ENCODE measurements at regions of chr2 and their contacts with region 1.

Region 1: GRCh38 chr2:100818606-100819369 is 1.2 kb upstream of the NPAS2 start:
- DNase-seq: peak; percentile 86 to 88
- ATAC-seq: peak; percentile 59 to 64
- H3K4me3 ChIP-seq: peak overlapping the region; percentile 68 to 82 (median 70)
- H3K27ac ChIP-seq: peak overlapping the region; percentile 76 to 92 (median 88)
- H3K4me1 ChIP-seq: peaks cover 26 to 33% of the 10 kb centered on the region in 2 donors
- H3K27me3 ChIP-seq: no peaks in the 10 kb centered on the region
- CTCF ChIP-seq: peak in 2 of 5 experiments; percentile 11 to 30
- POLR2A ChIP-seq: peak; percentile 56 to 58

Region 2: DNA sequence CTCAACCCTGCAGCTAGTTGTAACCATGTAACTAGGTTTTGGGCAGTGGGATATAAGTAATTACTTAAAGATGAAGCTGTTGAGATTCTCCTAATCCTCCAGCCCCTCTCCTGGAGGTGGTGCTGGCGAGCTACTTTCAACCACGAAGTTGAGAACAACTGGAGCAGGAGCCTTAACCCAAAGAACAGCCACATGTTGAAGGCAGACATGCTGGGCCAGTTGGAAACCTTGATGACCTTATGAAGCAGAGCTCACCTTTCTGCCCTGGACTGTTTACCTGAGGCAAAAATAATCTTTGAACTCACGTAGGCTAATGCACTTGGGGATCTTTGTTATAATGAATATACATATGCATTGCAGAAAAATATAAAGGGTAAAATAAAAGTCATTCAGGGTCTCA is 88.4 kb before region 1 on chr2:
- in situ Hi-C with region 1: no loop called
- intact Hi-C with region 1: loop called (anchors 2 kb)
- DNase-seq: peak; percentile 14 to 48
- ATAC-seq: peak; percentile 57 to 66
- H3K4me3 ChIP-seq: no peak overlapping the region
- H3K27ac ChIP-seq: no peak overlapping the region
- H3K4me1 ChIP-seq: peaks cover 0 to 3% of the 10 kb centered on the region in 2 donors
- H3K27me3 ChIP-seq: no peaks in the 10 kb centered on the region
- CTCF ChIP-seq: peak; percentile 36 to 62 (median 55)
- POLR2A ChIP-seq: no peak

Region 3: GRCh38 chr2:100935372-100935752 is 116.6 kb after region 1 on chr2:
- in situ Hi-C with region 1: no loop called
- intact Hi-C with region 1: loop called (anchors 5 kb)
- DNase-seq: no peak
- ATAC-seq: peak; percentile 78 to 84
- H3K4me3 ChIP-seq: no peak overlapping the region
- H3K27ac ChIP-seq: peak overlapping the region in 1 of 4 donors; percentile 25
- H3K4me1 ChIP-seq: peaks cover 15 to 21% of the 10 kb centered on the region in 2 donors
- H3K27me3 ChIP-seq: no peaks in the 10 kb centered on the region
- CTCF ChIP-seq: no peak
- POLR2A ChIP-seq: no peak

Region 4: DNA sequence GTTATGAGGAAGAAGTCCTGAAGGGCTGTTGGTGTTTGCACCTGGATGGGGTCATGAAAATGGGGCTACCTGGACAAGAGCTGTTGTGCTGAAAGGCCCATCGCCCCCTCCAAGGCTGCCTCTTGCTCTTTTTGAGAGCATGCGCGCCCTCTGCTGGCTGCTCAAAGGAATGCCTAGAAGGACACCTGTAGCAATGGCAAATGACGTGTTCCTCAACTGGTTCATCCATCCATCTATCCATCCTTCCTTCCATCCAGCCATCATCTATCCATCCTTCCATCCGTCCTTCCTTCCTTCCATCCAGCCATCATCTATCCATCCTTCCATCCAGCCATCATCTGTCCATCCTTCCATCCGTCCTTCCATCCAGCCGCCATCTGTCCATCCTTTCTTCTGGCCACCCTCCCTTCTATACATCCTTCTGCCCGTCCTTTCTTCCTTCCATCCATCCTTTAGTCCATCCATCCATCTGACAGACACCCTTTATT is 166.1 kb after region 1 on chr2:
- in situ Hi-C with region 1: no loop called
- intact Hi-C with region 1: loop called (anchors 10 kb)
- DNase-seq: peak; percentile 53 to 65
- ATAC-seq: peak; percentile 57 to 75
- H3K4me3 ChIP-seq: no peak overlapping the region
- H3K27ac ChIP-seq: no peak overlapping the region
- H3K4me1 ChIP-seq: no peaks in the 10 kb centered on the region
- H3K27me3 ChIP-seq: no peaks in the 10 kb centered on the region
- CTCF ChIP-seq: peak; percentile 82 to 91 (median 88)
- POLR2A ChIP-seq: no peak

Region 5: DNA sequence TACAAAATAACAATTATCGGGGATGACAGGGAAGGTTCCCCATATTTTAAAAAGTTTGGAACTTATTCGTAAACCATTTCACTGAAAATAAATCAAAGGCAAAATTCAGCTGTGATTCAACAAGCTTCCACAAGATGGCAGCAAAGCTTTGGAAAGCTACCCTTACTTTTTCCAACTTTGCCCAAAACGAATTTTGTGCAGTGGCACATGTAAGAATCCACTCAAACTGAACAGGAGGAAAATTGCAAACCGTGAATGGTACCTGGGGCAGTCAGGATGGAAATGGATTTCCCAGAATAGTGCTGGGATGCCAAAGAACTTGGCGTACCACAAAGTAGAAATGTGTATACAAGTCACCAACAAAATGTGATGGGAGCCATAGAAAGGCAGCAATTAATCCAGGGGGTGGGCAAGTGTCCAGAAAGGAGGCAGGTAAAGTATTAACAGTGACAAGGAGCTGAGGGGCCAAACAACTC is 194.0 kb after region 1 on chr2:
- in situ Hi-C with region 1: no loop called
- intact Hi-C with region 1: no loop called
- DNase-seq: no peak
- ATAC-seq: peak in 1 of 2 donors; percentile 28
- H3K4me3 ChIP-seq: no peak overlapping the region
- H3K27ac ChIP-seq: peak overlapping the region; percentile 26 to 50 (median 32)
- H3K4me1 ChIP-seq: peaks cover 9 to 21% of the 10 kb centered on the region in 2 donors
- H3K27me3 ChIP-seq: no peaks in the 10 kb centered on the region
- CTCF ChIP-seq: peak; percentile 78 to 88 (median 82)
- POLR2A ChIP-seq: no peak

Region 6: GRCh38 chr2:101252408-101253012 is 433.7 kb after region 1 on chr2 and contains the start of gene CNOT11:
- in situ Hi-C with region 1: no loop called
- intact Hi-C with region 1: loop called (anchors 1 kb)
- DNase-seq: peak; percentile 97 to 99
- ATAC-seq: peak; percentile 91 to 93
- H3K4me3 ChIP-seq: peak within 1 kb of the TSS; percentile 72 to 99 (median 84)
- H3K27ac ChIP-seq: peak within 1 kb of the TSS; percentile 81 to 100 (median 94)
- H3K4me1 ChIP-seq: peaks cover 17 to 31% of the 10 kb centered on the region in 2 donors
- H3K27me3 ChIP-seq: no peaks in the 10 kb centered on the region
- CTCF ChIP-seq: no peak
- POLR2A ChIP-seq: peak; percentile 80 to 93
- total RNA-seq, gene CNOT11: 31.2 to 42.0 (median 35.5) TPM

Measured in gastrocnemius medialis (tissue), 4 donors.